ENCODE measurements at regions of chr17 and their contacts with region 1.

Region 1: DNA sequence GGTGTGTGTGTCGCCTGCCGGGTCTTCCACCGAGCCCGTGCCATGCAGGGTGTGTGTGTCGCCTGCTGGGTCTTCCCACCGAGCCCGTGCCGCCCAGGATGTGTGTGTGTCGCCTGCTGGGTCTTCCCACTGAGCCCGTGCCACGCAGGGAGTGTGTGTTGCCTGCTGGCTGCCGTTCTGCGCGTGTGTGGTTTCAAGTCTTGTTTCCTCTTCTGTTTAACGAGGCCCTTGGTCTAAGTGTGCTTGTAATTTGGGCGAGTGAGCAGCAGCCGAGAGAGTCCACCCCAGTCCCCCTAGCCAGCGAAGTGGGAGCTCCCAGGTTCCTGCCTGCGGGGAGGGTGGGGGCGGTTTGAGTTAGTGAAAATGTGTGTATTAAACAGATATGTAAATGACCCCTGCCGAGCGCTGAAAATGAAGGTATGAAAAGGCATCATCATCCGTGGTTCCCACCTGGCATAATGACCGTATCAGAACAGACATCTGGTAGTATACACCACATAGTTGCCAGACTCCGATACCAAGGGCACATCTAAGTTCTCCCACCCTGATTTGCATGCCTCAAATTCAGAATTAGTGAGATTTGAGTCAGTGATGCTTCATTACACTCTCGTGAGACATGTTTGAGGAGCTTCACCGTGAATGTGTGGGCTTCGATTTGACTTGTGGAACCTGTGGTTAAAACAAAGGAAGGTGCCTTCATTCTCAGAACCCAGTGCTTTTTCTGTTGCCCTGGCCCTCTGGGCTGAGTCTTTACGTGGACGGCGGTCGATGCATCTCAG is 114.5 kb upstream of the CHMP6 start:
- DNase-seq: peak; percentile 85
- H3K4me3 Mint-ChIP-seq: peak overlapping the region; percentile 64
- H3K27ac Mint-ChIP-seq: peak overlapping the region; percentile 96
- H3K4me1 Mint-ChIP-seq: peaks cover 51% of the 10 kb centered on the region
- H3K27me3 Mint-ChIP-seq: no peaks in the 10 kb centered on the region

Region 2: DNA sequence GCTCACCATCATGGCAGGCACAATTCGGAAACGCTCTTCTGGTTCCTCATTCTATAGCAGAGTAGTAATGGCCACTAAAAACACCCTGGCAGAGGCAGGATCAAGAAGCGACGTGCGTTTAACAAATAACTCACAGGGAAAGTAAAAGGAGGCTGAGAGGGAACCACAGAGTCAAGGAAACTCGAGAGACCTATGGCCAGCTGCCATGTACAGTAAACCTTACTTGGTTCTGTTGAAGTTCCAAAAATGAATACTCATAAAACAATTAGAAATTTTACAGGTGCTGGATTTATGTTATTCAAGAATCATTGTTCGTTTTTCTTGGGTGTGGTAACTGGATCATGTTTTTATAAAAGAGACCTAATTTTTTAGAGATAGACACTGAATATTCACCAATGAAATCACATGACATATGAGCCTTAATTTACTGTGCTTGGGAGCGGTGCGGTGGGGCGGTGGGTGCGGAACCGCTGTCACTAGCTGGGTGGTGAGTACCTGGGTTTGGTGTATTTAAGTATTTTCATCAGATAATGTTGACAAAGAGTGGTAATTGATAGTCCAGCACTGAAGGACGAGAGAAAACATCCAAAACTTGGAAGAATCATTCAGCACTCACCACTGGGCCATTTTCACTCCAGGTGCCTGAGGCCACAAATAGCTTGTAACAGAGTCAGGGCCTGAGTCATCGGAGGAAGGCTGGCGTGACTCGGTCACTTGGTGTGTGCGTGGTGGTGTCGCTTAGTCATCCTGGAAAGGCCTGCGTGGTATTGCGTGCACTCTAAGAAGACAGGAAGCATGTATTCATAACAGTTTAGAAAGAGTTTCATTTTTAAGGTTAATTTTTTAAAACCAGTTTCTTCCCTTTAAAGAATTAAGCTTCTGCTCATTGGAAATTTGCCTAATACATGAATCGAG is 20.9 kb before region 1 on chr17:
- CTCF ChIA-PET with region 1: no interaction called
- intact Hi-C with region 1: loop called (anchors 1 kb)
- DNase-seq: peak; percentile 96
- H3K4me3 Mint-ChIP-seq: peak overlapping the region; percentile 9
- H3K27ac Mint-ChIP-seq: peak overlapping the region; percentile 94
- H3K4me1 Mint-ChIP-seq: peaks cover 75% of the 10 kb centered on the region
- H3K27me3 Mint-ChIP-seq: no peaks in the 10 kb centered on the region

Region 3: GRCh38 chr17:80938556-80938955 is 61.4 kb after region 1 on chr17:
- CTCF ChIA-PET with region 1: no interaction called
- intact Hi-C with region 1: loop called (anchors 1 kb)
- DNase-seq: peak; percentile 71
- H3K4me3 Mint-ChIP-seq: no peak overlapping the region
- H3K27ac Mint-ChIP-seq: peak overlapping the region; percentile 32
- H3K4me1 Mint-ChIP-seq: peaks cover 40% of the 10 kb centered on the region
- H3K27me3 Mint-ChIP-seq: no peaks in the 10 kb centered on the region

Measured in activated naive CD4-positive, alpha-beta T cell treated with anti-CD3 and anti-CD28 coated beads for 36 hours (primary cell).